Psoas muscle (tissue), 8 donors: ENCODE measurements at regions of chr15 and their contacts with region 1.

Region 1: GRCh38 chr15:58182460-58183163 is 44.4 kb downstream of the AQP9 start:
- DNase-seq: peak; percentile 25 to 57
- ATAC-seq: peak; percentile 57 to 68 (median 62)
- H3K4me3 ChIP-seq: no peak overlapping the region
- H3K27ac ChIP-seq: no peak overlapping the region
- H3K4me1 ChIP-seq: no peaks in the 10 kb centered on the region
- H3K27me3 ChIP-seq: peaks cover 0 to 4% (median 0%) of the 10 kb centered on the region in 3 donors
- CTCF ChIP-seq: peak; percentile 68

Region 2: DNA sequence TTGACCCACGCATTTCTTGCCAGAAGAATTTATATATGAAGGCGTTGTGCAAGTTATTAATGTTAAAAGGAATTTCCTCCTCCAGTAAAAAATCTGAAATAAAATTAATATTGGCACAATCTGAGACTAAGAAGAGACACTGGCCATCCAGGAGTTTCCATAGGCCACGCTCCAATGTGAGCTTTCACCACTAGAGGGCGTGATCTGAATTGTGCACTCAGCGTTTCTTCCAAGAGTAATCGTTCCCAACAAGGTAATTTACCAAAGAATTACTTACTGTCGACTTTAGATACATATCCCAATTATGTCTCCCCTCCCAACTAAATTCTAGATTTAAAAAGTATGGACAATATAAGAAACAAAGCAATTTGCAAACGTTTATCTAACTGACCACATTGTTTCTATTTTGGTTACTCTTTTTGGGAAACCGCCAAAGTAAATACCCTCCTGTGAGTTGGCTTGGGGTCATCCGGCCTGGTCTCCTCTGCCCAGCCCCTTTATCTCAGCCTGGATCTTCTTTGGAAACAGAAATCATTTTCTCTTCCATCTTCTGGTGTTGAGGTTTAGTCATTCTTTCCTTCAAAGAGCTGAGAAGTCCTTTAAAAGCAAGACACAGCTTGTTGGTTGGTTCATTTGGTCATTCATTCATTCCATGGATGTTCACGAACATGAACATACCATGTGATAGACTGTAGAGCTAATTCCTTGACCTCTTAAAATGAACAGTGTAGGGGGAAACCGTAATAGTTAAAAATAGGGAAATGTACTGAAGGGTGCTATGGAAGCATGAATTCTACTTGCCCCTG is 449.9 kb before region 1 on chr15:
- intact Hi-C with region 1: loop called in 1 of 2 experiments (anchors 10 kb)
- DNase-seq: peak in 1 of 2 donors; percentile 29
- ATAC-seq: peak in 3 of 4 donors; percentile 61 to 81 (median 63)
- H3K4me3 ChIP-seq: no peak overlapping the region
- H3K27ac ChIP-seq: no peak overlapping the region
- H3K4me1 ChIP-seq: no peaks in the 10 kb centered on the region
- H3K27me3 ChIP-seq: no peaks in the 10 kb centered on the region
- CTCF ChIP-seq: peak; percentile 83

Region 3: DNA sequence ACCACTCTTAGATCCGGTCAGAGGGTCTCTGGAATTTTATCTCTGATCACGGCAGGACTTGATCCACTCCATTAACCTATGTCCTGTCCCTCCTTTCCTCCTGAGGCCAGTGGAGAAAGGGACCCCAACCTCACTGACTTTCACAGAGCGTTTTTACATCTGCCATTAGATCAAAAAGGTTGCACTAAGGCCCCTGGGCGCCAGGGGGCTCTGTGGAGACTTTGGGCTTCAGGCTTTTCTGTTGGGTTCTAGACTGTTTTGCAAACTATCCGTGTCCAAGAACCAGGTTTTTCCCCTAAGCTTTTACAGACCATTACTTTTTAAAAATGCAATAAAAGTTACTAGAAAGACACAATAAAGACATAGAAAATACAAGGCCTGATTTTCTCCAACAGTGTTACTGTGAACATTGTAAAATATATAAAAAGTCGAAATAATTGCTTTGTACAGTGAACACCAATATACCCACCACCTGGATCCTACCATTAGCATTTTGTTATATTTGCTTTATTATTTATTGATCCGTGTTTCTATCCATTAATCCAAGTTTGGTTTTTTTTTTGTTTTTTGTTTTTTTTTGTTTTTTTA is 316.4 kb before region 1 on chr15:
- intact Hi-C with region 1: loop called in 1 of 2 experiments (anchors 5 kb)
- DNase-seq: peak; percentile 44 to 59
- ATAC-seq: peak in 1 of 4 donors; percentile 36
- H3K4me3 ChIP-seq: no peak overlapping the region
- H3K27ac ChIP-seq: no peak overlapping the region
- H3K4me1 ChIP-seq: no peaks in the 10 kb centered on the region
- H3K27me3 ChIP-seq: no peaks in the 10 kb centered on the region
- CTCF ChIP-seq: peak; percentile 53

Region 4: GRCh38 chr15:58026552-58026951 is 156.1 kb before region 1 on chr15:
- intact Hi-C with region 1: no loop called
- DNase-seq: no peak
- ATAC-seq: no peak
- H3K4me3 ChIP-seq: no peak overlapping the region
- H3K27ac ChIP-seq: no peak overlapping the region
- H3K4me1 ChIP-seq: no peaks in the 10 kb centered on the region
- H3K27me3 ChIP-seq: no peaks in the 10 kb centered on the region
- CTCF ChIP-seq: no peak

Region 5: GRCh38 chr15:58043192-58043903 is 139.3 kb before region 1 on chr15:
- intact Hi-C with region 1: loop called in 1 of 2 experiments (anchors 5 kb)
- DNase-seq: peak; percentile 21 to 52
- ATAC-seq: peak in 1 of 4 donors; percentile 29
- H3K4me3 ChIP-seq: no peak overlapping the region
- H3K27ac ChIP-seq: no peak overlapping the region
- H3K4me1 ChIP-seq: no peaks in the 10 kb centered on the region
- H3K27me3 ChIP-seq: peaks cover 0 to 6% (median 2%) of the 10 kb centered on the region in 3 donors
- CTCF ChIP-seq: peak; percentile 60

Region 6: GRCh38 chr15:58115692-58116091 is 66.9 kb before region 1 on chr15:
- intact Hi-C with region 1: loop called in 1 of 2 experiments (anchors 5 kb)
- DNase-seq: no peak
- ATAC-seq: no peak
- H3K4me3 ChIP-seq: no peak overlapping the region
- H3K27ac ChIP-seq: no peak overlapping the region
- H3K4me1 ChIP-seq: no peaks in the 10 kb centered on the region
- H3K27me3 ChIP-seq: peaks cover 0 to 5% (median 3%) of the 10 kb centered on the region in 3 donors
- CTCF ChIP-seq: no peak

Region 7: GRCh38 chr15:58165661-58166060 is 17.0 kb before region 1 on chr15:
- intact Hi-C with region 1: no loop called
- DNase-seq: peak in 1 of 2 donors; percentile 14
- ATAC-seq: no peak
- H3K4me3 ChIP-seq: no peak overlapping the region
- H3K27ac ChIP-seq: no peak overlapping the region
- H3K4me1 ChIP-seq: no peaks in the 10 kb centered on the region
- H3K27me3 ChIP-seq: peaks cover 0 to 12% (median 2%) of the 10 kb centered on the region in 3 donors
- CTCF ChIP-seq: no peak

Region 8: GRCh38 chr15:58724466-58724865 is 541.9 kb after region 1 on chr15:
- intact Hi-C with region 1: no loop called
- DNase-seq: no peak
- ATAC-seq: no peak
- H3K4me3 ChIP-seq: no peak overlapping the region
- H3K27ac ChIP-seq: no peak overlapping the region
- H3K4me1 ChIP-seq: peaks cover 21% of the 10 kb centered on the region
- H3K27me3 ChIP-seq: no peaks in the 10 kb centered on the region
- CTCF ChIP-seq: no peak